ENCODE measurements at regions of chr19 and their contacts with region 1.

Region 1: DNA sequence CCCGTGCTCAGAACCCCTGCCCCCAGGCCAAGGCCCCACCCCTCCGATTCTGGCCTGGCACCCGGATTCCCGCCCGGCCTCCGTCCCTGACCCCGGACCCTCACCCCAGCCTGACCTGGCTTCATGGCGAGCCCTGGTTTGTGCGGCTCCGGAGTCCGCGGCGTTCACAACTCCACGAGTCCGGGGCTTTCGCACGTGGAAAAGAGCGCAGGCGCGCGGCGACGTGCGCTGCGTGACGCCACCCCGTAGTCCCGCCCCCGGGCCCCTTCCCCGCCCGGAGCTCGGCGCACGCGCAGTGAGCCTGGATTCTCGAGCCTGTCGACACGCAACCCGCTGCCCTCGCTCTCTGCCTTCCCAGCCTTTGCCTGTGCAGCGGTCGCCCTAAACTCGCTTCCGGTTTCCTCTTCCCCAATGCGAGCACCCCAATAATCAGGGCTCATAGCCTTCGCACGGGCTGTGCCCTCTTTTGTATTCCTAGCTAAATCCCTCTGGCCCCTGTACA is at the start of gene FBL:
- DNase-seq: peak; percentile 98
- H3K4me3 Mint-ChIP-seq: peak within 1 kb of the TSS; percentile 91
- H3K27ac Mint-ChIP-seq: peak within 1 kb of the TSS; percentile 88
- H3K4me1 Mint-ChIP-seq: peaks cover 38% of the 10 kb centered on the region
- H3K27me3 Mint-ChIP-seq: no peaks in the 10 kb centered on the region
- total RNA-seq, gene FBL: 742 to 785 TPM

Region 2: DNA sequence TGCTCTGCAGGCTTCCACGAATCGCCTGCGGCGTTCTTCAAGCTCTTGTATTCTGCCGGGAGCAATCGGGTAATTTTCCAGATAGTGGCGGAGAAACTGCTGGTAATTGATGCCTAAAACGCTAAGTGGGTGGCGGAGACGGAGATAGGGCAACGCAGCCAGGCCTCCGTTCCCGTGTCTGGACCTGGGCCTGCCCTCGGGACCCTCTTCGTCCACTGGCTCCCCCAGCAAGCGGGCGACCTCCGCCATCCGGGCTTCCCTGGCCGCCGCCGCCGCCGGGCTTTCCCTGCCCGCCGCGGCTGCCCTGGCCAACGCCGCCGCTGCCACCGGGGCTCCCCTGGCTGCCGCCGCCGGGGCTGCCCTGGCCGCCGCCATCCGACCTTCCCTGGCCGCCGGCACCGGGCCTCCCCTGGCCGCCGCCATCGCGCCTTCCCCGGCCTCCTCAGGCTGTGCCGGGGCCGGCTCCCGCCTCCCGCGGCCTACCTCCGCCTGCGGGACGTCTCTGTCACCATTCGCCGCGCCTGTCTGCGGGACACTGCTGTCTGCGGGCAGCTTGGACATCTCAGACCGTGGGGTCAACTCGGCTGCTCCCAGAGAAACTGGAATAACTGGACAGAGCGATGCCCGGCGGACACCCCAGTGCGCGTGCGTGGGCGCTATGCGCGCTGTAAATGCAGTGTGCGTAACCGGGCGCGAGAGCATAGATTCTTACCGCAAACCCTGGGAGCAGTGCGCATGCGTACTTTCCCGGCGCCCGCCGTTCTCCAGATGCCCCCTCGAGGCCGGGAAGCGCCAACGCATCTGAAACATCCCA is 306.5 kb before region 1 on chr19 and contains the start of gene EID2:
- CTCF ChIA-PET with region 1: interaction called, 3 read pairs
- intact Hi-C with region 1: loop called (anchors 10 kb)
- DNase-seq: peak; percentile 97
- H3K4me3 Mint-ChIP-seq: peak within 1 kb of the TSS; percentile 93
- H3K27ac Mint-ChIP-seq: peak within 1 kb of the TSS; percentile 97
- H3K4me1 Mint-ChIP-seq: peaks cover 61% of the 10 kb centered on the region
- H3K27me3 Mint-ChIP-seq: no peaks in the 10 kb centered on the region
- total RNA-seq, gene EID2: 7.7 to 9.1 TPM

Region 3: DNA sequence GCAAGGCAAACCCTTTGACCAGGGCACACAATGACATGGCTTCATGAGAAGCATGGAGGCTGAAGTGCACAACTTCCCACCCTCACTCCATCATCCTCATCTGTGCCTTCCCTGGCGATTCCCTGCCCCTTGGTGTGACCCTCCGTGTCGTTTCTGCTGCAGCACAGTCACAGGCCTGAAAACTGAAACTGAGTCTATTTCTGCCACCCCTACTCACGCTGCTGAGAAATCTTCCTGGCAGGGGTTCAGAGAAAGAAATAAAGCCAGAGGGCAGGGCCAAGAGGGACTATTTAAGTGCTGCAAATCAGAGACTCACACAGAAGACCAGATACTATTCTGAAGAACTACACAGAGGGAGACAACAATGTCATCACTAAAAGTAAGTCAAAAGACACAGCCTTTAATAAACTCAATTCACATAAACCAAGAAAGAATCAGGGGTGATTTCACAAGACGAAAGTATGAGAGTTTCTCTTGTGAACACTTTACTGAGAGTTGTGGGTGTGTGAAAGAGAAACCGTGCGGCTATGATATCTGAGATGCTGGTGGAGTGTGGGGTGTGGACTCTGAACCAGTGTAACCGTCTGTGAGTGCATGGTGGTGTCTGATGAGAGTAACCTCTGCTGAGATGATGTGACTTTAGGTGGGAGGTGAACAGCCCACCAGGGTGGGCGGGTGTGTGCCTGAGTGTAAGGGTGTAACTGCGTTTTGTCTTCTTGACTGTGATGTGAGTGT is 167.0 kb before region 1 on chr19:
- CTCF ChIA-PET with region 1: interaction called, 17 read pairs
- intact Hi-C with region 1: loop called (anchors 1 kb)
- DNase-seq: peak; percentile 71
- H3K4me3 Mint-ChIP-seq: peak overlapping the region; percentile 69
- H3K27ac Mint-ChIP-seq: peak overlapping the region; percentile 84
- H3K4me1 Mint-ChIP-seq: peaks cover 50% of the 10 kb centered on the region
- H3K27me3 Mint-ChIP-seq: no peaks in the 10 kb centered on the region

Region 4: GRCh38 chr19:39696418-39696817 is 149.8 kb before region 1 on chr19:
- CTCF ChIA-PET with region 1: no interaction called
- intact Hi-C with region 1: no loop called
- DNase-seq: no peak
- H3K4me3 Mint-ChIP-seq: no peak overlapping the region
- H3K27ac Mint-ChIP-seq: no peak overlapping the region
- H3K4me1 Mint-ChIP-seq: peaks cover 6% of the 10 kb centered on the region
- H3K27me3 Mint-ChIP-seq: no peaks in the 10 kb centered on the region

Region 5: GRCh38 chr19:39833464-39834286 is 12.6 kb before region 1 on chr19 and contains the start of gene DYRK1B:
- CTCF ChIA-PET with region 1: interaction called, 22 read pairs
- intact Hi-C with region 1: loop called (anchors 1 kb)
- DNase-seq: peak; percentile 98
- H3K4me3 Mint-ChIP-seq: peak within 1 kb of the TSS; percentile 63
- H3K27ac Mint-ChIP-seq: peak within 1 kb of the TSS; percentile 83
- H3K4me1 Mint-ChIP-seq: peaks cover 27% of the 10 kb centered on the region
- H3K27me3 Mint-ChIP-seq: no peaks in the 10 kb centered on the region
- total RNA-seq, gene DYRK1B: 6.1 to 6.6 TPM